B cell (primary cell): ENCODE measurements at regions of chr2 and their contacts with region 1.

Region 1: GRCh38 chr2:88055371-88056128 is at the start of gene KRCC1:
- DNase-seq: peak; percentile 97
- ATAC-seq: peak; percentile 95
- H3K4me3 ChIP-seq: peak within 1 kb of the TSS; percentile 73 to 95 (median 89)
- H3K4me3 Mint-ChIP-seq: peak within 1 kb of the TSS; percentile 98
- H3K27ac ChIP-seq: peak within 1 kb of the TSS; percentile 95 to 96
- H3K27ac Mint-ChIP-seq: peak within 1 kb of the TSS; percentile 97
- H3K4me1 ChIP-seq: peaks cover 20 to 22% of the 10 kb centered on the region in 2 donors
- H3K4me1 Mint-ChIP-seq: peaks cover 39% of the 10 kb centered on the region
- H3K27me3 ChIP-seq: no peaks in the 10 kb centered on the region
- H3K27me3 Mint-ChIP-seq: no peaks in the 10 kb centered on the region
- CTCF ChIP-seq: no peak
- total RNA-seq, gene KRCC1: 27.1 and 27.2 TPM in 2 replicates

Region 2: GRCh38 chr2:86562922-86563649 is 1492.5 kb before region 1 on chr2 and contains the start of gene CHMP3:
- CTCF ChIA-PET with region 1: no interaction called
- POLR2A ChIA-PET with region 1: no interaction called
- intact Hi-C with region 1: loop called (anchors 5 kb)
- DNase-seq: peak; percentile 99
- ATAC-seq: peak; percentile 86
- H3K4me3 ChIP-seq: peak within 1 kb of the TSS; percentile 87 to 100 (median 95)
- H3K4me3 Mint-ChIP-seq: peak within 1 kb of the TSS; percentile 93
- H3K27ac ChIP-seq: peak within 1 kb of the TSS; percentile 99 to 100
- H3K27ac Mint-ChIP-seq: peak within 1 kb of the TSS; percentile 98
- H3K4me1 ChIP-seq: peaks cover 20 to 26% of the 10 kb centered on the region in 2 donors
- H3K4me1 Mint-ChIP-seq: peaks cover 41% of the 10 kb centered on the region
- H3K27me3 ChIP-seq: no peaks in the 10 kb centered on the region
- H3K27me3 Mint-ChIP-seq: peaks cover 3% of the 10 kb centered on the region
- CTCF ChIP-seq: no peak
- total RNA-seq, gene CHMP3: 61.4 and 72.5 TPM in 2 replicates

Region 3: DNA sequence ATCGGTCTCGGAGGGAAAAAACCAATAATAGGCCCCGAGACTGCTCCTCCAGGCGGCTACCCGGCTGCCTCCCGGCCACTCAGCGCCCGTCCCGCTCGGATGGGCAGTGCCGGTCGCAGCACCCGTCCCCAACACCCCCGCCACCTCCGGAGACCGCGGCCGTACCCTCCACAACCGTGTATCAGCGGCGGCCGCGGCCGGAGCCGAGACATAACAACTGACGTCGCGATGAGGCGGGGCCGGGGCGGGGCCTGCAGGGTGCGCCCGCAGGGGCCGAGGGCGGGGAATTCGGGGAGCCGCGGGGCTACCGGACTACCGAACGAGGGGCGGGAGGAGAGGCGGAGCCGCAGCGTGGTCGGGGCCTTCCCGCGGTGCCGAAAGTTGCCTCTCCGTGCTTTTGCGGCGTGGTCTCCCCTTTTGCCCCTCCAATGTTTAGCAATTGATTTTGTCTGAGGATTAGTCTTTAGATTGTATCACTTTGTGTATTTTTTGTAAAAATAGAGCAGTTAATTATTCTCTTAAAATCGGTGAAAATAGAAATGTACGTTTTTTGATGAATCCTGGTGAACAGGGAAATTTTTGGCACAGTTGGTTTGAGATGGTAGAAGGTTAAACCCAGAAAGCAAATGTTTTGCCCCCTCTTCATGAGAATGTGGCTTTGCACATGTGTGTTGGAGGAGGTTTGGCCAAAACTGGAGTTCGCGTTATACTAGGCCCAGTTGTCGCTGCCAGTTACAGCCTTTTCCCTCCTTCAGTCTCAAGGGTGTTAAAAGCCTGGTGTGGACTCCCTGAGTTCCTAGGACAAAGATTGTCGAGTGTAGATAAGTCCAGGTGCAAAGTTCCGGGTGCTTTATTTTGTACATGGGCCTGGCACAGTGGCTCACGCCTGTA is 1431.7 kb before region 1 on chr2 and contains the start of gene RNF103:
- CTCF ChIA-PET with region 1: no interaction called
- POLR2A ChIA-PET with region 1: no interaction called
- intact Hi-C with region 1: loop called (anchors 2 kb)
- DNase-seq: peak; percentile 97
- ATAC-seq: peak; percentile 82
- H3K4me3 ChIP-seq: peak within 1 kb of the TSS; percentile 71 to 87 (median 78)
- H3K4me3 Mint-ChIP-seq: peak within 1 kb of the TSS; percentile 94
- H3K27ac ChIP-seq: peak within 1 kb of the TSS; percentile 93 to 94
- H3K27ac Mint-ChIP-seq: peak within 1 kb of the TSS; percentile 97
- H3K4me1 ChIP-seq: peaks cover 17% of the 10 kb centered on the region in 2 donors
- H3K4me1 Mint-ChIP-seq: peaks cover 35% of the 10 kb centered on the region
- H3K27me3 ChIP-seq: no peaks in the 10 kb centered on the region
- H3K27me3 Mint-ChIP-seq: no peaks in the 10 kb centered on the region
- CTCF ChIP-seq: no peak
- total RNA-seq, gene RNF103: 36.1 and 37.2 TPM in 2 replicates

Region 4: DNA sequence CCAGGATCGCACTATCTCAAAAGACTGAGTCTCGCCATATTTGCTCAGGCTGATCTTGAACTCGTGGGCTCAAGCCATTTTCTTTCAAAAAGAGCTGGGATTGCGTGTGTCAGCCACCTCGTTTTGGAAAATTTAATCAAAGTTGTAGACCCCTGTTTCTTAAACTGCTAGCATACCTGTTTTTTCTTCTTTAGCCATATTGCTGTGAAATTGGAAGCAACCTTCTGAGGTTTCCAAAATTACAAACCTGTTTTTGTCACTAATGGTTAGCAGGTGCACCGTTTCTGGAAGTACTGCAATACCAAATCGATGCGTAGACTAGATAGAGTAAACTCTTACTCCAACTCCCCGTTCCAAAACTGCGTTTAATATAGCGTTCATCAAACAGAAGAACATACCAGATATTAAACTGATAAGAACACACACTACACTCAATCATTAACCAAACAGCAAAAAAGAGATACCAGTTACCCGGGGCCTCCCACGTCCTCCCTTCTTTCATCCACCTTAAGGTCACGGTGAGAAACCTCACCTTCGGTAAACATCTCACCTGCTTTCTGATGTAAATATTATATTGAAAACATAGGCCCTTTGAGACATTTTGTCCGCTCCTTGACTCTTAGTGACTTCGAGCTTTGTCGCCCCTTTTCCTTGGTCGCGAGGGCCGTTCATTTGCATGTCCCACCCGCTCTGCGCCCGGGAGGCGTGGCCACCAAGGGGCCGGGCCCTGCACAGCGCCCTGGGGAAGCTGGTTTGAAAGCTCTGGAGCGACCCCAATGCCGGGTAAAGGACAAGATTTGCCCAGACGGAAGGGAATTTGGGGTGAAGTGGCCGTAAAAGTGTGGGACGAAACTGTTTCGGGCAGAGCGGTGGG is 39.2 kb before region 1 on chr2 and contains the start of gene RNU2-63P:
- CTCF ChIA-PET with region 1: interaction called, 5 read pairs
- POLR2A ChIA-PET with region 1: interaction called, 15 read pairs
- intact Hi-C with region 1: loop called (anchors 1 kb)
- DNase-seq: peak; percentile 94
- ATAC-seq: peak; percentile 84
- H3K4me3 ChIP-seq: peak within 1 kb of the TSS; percentile 39 to 95 (median 91)
- H3K4me3 Mint-ChIP-seq: peak within 1 kb of the TSS; percentile 100
- H3K27ac ChIP-seq: peak within 1 kb of the TSS; percentile 98 to 99
- H3K27ac Mint-ChIP-seq: peak within 1 kb of the TSS; percentile 98
- H3K4me1 ChIP-seq: peaks cover 6 to 15% of the 10 kb centered on the region in 2 donors
- H3K4me1 Mint-ChIP-seq: peaks cover 25% of the 10 kb centered on the region
- H3K27me3 ChIP-seq: no peaks in the 10 kb centered on the region
- H3K27me3 Mint-ChIP-seq: no peaks in the 10 kb centered on the region
- CTCF ChIP-seq: no peak
- total RNA-seq, gene RNU2-63P: 8.9 and 9.3 TPM in 2 replicates

Region 5: GRCh38 chr2:88038263-88039105 is 17.1 kb before region 1 on chr2:
- CTCF ChIA-PET with region 1: interaction called, 13 read pairs
- POLR2A ChIA-PET with region 1: no interaction called
- intact Hi-C with region 1: no loop called
- DNase-seq: no peak
- ATAC-seq: peak; percentile 21
- H3K4me3 ChIP-seq: no peak overlapping the region
- H3K4me3 Mint-ChIP-seq: no peak overlapping the region
- H3K27ac ChIP-seq: no peak overlapping the region
- H3K27ac Mint-ChIP-seq: no peak overlapping the region
- H3K4me1 ChIP-seq: no peaks in the 10 kb centered on the region
- H3K4me1 Mint-ChIP-seq: peaks cover 37% of the 10 kb centered on the region
- H3K27me3 ChIP-seq: no peaks in the 10 kb centered on the region
- H3K27me3 Mint-ChIP-seq: no peaks in the 10 kb centered on the region
- CTCF ChIP-seq: no peak

Region 6: DNA sequence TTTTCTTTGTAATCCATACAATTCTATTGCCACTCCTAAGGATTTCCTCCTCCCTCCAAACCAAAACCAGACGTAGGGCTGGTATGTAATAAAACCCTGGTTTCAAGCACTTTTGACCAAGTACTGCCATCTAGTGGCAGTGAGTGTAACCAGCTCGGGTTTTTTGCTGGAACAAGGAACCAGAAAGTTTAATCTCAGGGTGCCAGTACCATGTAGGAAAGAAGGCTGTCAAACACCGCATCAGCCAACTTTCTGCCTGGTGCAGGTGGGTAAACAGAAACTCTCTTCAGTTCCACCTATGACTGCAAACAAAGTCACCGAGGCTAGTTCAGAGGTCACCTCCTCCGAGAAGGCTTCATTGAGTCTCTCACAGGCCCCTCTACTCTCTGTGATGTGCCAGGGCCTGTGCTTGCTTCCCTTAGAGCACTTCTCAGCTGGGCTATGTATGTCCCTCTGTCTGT is 104.4 kb after region 1 on chr2:
- CTCF ChIA-PET with region 1: interaction called, 46 read pairs
- POLR2A ChIA-PET with region 1: no interaction called
- intact Hi-C with region 1: loop called (anchors 1 kb)
- DNase-seq: peak; percentile 75
- ATAC-seq: peak; percentile 57
- H3K4me3 ChIP-seq: no peak overlapping the region
- H3K4me3 Mint-ChIP-seq: no peak overlapping the region
- H3K27ac ChIP-seq: no peak overlapping the region
- H3K27ac Mint-ChIP-seq: no peak overlapping the region
- H3K4me1 ChIP-seq: no peaks in the 10 kb centered on the region
- H3K4me1 Mint-ChIP-seq: peaks cover 1% of the 10 kb centered on the region
- H3K27me3 ChIP-seq: no peaks in the 10 kb centered on the region
- H3K27me3 Mint-ChIP-seq: no peaks in the 10 kb centered on the region
- CTCF ChIP-seq: peak; percentile 95

Region 7: GRCh38 chr2:88627056-88627855 is 571.7 kb after region 1 on chr2 and contains the start of gene EIF2AK3:
- CTCF ChIA-PET with region 1: no interaction called
- POLR2A ChIA-PET with region 1: no interaction called
- intact Hi-C with region 1: loop called (anchors 10 kb)
- DNase-seq: peak; percentile 100
- ATAC-seq: peak; percentile 83
- H3K4me3 ChIP-seq: peak within 1 kb of the TSS; percentile 75 to 95 (median 88)
- H3K4me3 Mint-ChIP-seq: peak within 1 kb of the TSS; percentile 96
- H3K27ac ChIP-seq: peak within 1 kb of the TSS; percentile 99
- H3K27ac Mint-ChIP-seq: peak within 1 kb of the TSS; percentile 96
- H3K4me1 ChIP-seq: peaks cover 43 to 50% of the 10 kb centered on the region in 2 donors
- H3K4me1 Mint-ChIP-seq: peaks cover 20% of the 10 kb centered on the region
- H3K27me3 ChIP-seq: no peaks in the 10 kb centered on the region
- H3K27me3 Mint-ChIP-seq: no peaks in the 10 kb centered on the region
- CTCF ChIP-seq: no peak
- total RNA-seq, gene EIF2AK3: 57.9 and 67.5 TPM in 2 replicates